Endothelial cell of umbilical vein (primary cell): ENCODE measurements at regions of chrX and their contacts with region 1.

Region 1: DNA sequence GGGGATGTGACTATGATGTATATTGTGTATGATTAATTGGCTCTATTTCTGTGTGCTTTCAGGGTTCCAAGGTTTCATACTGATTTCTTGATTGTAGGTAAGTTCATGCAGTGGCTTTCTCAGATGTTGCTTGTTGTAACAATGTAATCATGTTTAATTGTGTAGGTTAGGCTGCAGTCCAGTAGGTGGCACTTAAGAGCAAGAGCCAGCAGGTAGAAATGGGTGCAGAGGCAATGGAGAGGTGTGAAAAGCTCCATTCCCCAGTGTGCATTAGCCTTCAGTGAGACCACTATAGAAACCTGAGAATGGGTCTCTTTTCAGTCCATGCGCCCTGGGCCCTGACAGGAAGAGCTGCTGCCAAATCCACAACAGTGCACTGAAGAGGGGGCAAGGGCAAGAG is 28.2 kb downstream of the DCAF12L2 start:
- DNase-seq: no peak
- H3K4me3 ChIP-seq: no peak overlapping the region
- H3K27ac ChIP-seq: no peak overlapping the region
- H3K4me1 ChIP-seq: no peaks in the 10 kb centered on the region
- H3K27me3 ChIP-seq: no peaks in the 10 kb centered on the region
- CTCF ChIP-seq: no peak
- POLR2A ChIP-seq: no peak

Region 2: GRCh38 chrX:124406294-124407014 is 1731.4 kb before region 1 on chrX:
- CTCF ChIA-PET with region 1: no interaction called
- POLR2A ChIA-PET with region 1: no interaction called
- dilution Hi-C with region 1: no loop called
- intact Hi-C with region 1: loop called (anchors 10 kb)
- DNase-seq: peak; percentile 74
- H3K4me3 ChIP-seq: no peak overlapping the region
- H3K27ac ChIP-seq: no peak overlapping the region
- H3K4me1 ChIP-seq: peaks cover 4% of the 10 kb centered on the region
- H3K27me3 ChIP-seq: no peaks in the 10 kb centered on the region
- CTCF ChIP-seq: peak; percentile 27 to 42
- POLR2A ChIP-seq: no peak

Region 3: DNA sequence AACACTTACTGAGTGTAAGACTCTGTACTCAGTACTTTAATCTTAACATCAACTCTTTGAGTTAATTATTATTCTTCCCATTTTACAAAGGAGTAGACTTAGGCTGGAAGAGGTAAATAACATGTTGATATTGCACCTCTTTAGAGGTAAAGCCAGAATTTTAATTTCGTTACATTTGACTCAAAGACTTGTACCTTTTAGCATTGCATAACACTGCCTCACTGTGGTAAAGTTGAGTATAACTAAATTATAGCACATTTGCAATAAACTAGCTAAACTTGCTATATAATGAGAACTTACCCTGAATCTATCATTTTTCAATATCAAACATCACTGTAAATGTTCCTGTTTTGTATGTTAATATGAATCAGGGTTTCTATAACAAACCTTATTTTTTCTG is 900.2 kb after region 1 on chrX:
- CTCF ChIA-PET with region 1: no interaction called
- POLR2A ChIA-PET with region 1: no interaction called
- dilution Hi-C with region 1: no loop called
- intact Hi-C with region 1: loop called (anchors 10 kb)
- DNase-seq: no peak
- H3K4me3 ChIP-seq: no peak overlapping the region
- H3K27ac ChIP-seq: no peak overlapping the region
- H3K4me1 ChIP-seq: no peaks in the 10 kb centered on the region
- H3K27me3 ChIP-seq: no peaks in the 10 kb centered on the region
- CTCF ChIP-seq: no peak
- POLR2A ChIP-seq: no peak